ENCODE measurements at regions of chr7 and their contacts with region 1.

Region 1: GRCh38 chr7:47435889-47436312 is 146.0 kb downstream of the TNS3 start:
- DNase-seq: peak; percentile 79
- H3K4me3 ChIP-seq: no peak overlapping the region
- H3K27ac ChIP-seq: no peak overlapping the region
- H3K4me1 ChIP-seq: peaks cover 0 to 12% of the 10 kb centered on the region in 2 experiments; a peak in 2 of 4 replicates
- H3K27me3 ChIP-seq: no peaks in the 10 kb centered on the region
- CTCF ChIP-seq: peak; percentile 79
- EP300 ChIP-seq: no peak
- RAD21 ChIP-seq: peak; percentile 95

Region 2: DNA sequence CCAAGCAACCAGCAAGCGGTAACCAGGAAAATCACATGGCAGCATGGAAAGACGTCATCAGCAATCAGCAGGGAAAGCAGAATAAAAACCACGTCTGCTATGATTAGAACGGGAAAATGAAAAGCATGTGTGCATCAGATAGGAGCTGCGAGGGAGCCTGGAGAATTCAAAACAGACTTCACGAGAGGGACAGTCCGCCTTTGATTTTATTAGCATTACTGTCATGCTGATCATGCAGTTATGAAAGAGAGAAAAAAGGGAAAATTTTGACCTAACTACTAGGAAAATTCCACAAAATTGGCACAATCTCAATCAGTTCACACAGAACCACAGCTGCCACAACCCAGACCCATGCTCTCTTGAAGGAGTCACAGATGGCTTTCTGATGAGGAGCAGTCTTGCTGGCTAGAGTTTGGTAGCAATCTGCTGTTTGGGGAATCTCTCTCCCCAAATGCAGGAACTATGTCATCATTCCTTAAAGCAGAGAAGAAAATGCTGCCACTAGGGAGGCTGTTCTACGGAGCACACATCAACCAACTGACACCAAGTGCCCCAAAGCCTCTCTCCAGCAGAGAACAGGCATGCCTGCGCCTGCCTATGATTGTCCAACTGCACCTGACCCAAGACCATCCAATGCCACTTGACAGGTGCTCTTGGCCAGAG is 149.9 kb before region 1 on chr7:
- CTCF ChIA-PET with region 1: interaction called, 12 read pairs
- POLR2A ChIA-PET with region 1: no interaction called
- DNase-seq: peak; percentile 85
- H3K4me3 ChIP-seq: no peak overlapping the region
- H3K27ac ChIP-seq: peak overlapping the region; percentile 77 to 80
- H3K4me1 ChIP-seq: peaks cover 4 to 20% of the 10 kb centered on the region in 2 experiments; a peak in 3 of 4 replicates
- H3K27me3 ChIP-seq: no peaks in the 10 kb centered on the region
- CTCF ChIP-seq: peak; percentile 47
- EP300 ChIP-seq: peak; percentile 62 to 88; a peak in 3 of 4 replicates
- RAD21 ChIP-seq: peak; percentile 33

Region 3: GRCh38 chr7:47418601-47419381 is 17.1 kb before region 1 on chr7:
- CTCF ChIA-PET with region 1: interaction called, 13 read pairs
- POLR2A ChIA-PET with region 1: no interaction called
- DNase-seq: no peak
- H3K4me3 ChIP-seq: no peak overlapping the region
- H3K27ac ChIP-seq: no peak overlapping the region
- H3K4me1 ChIP-seq: peaks cover 0 to 3% of the 10 kb centered on the region in 2 experiments; a peak in 1 of 4 replicates
- H3K27me3 ChIP-seq: no peaks in the 10 kb centered on the region
- CTCF ChIP-seq: no peak
- EP300 ChIP-seq: no peak
- RAD21 ChIP-seq: no peak

Region 4: GRCh38 chr7:47453093-47454049 is 17.5 kb after region 1 on chr7:
- CTCF ChIA-PET with region 1: interaction called, 60 read pairs
- POLR2A ChIA-PET with region 1: no interaction called
- DNase-seq: no peak
- H3K4me3 ChIP-seq: 0 out of 4 replicates have a peak overlapping the region, but pooled peaks of 1 of the 2 experiments have one; percentile 0
- H3K27ac ChIP-seq: peak overlapping the region; percentile 78 to 89
- H3K4me1 ChIP-seq: peaks cover 39 to 47% of the 10 kb centered on the region in 2 experiments
- H3K27me3 ChIP-seq: no peaks in the 10 kb centered on the region
- CTCF ChIP-seq: no peak
- EP300 ChIP-seq: peak in 1 of 2 experiments; percentile 51; a peak in 1 of 4 replicates
- RAD21 ChIP-seq: no peak

Region 5: DNA sequence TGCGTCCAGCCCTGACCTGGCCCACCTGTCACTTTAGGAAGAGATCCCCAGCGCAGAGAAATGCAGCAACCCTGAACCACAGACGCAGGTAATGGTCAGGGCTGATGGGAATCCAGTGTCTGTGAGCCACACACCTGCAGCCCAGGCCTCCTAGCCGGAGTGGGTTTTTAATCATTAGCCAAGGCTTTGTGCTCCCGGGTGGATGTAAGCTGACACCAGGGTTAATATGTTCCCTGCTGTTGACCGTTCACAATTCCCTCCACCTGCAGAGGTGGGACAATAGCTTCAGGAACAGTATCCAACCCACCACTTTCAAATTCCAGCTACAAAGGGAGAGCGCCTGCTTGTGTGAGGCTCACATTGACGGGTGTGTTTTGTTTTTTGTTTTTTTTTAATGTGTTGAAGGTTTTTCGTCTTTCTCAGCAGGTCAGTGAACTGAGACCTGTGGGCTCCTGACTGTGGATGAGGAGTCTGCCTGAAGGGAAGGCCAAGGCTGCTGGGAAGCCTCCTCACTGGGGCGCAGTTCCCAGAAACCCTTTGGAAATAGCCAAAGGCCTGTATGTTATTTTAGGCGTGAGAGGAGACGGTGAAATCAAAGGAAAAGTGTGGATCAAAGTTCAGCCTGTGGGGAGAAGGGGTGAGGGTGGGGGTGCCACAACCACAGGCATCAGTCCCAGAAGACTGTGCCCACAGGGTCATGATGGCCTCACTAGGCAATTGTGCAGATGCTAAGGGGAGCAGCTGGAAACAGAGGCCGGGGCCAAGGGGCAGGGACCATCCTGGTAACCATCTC is 34.9 kb after region 1 on chr7:
- CTCF ChIA-PET with region 1: no interaction called
- POLR2A ChIA-PET with region 1: no interaction called
- DNase-seq: no peak
- H3K4me3 ChIP-seq: no peak overlapping the region
- H3K27ac ChIP-seq: no peak overlapping the region
- H3K4me1 ChIP-seq: peaks cover 0 to 12% of the 10 kb centered on the region in 2 experiments; a peak in 3 of 4 replicates
- H3K27me3 ChIP-seq: no peaks in the 10 kb centered on the region
- CTCF ChIP-seq: no peak
- EP300 ChIP-seq: no peak
- RAD21 ChIP-seq: no peak

Region 6: DNA sequence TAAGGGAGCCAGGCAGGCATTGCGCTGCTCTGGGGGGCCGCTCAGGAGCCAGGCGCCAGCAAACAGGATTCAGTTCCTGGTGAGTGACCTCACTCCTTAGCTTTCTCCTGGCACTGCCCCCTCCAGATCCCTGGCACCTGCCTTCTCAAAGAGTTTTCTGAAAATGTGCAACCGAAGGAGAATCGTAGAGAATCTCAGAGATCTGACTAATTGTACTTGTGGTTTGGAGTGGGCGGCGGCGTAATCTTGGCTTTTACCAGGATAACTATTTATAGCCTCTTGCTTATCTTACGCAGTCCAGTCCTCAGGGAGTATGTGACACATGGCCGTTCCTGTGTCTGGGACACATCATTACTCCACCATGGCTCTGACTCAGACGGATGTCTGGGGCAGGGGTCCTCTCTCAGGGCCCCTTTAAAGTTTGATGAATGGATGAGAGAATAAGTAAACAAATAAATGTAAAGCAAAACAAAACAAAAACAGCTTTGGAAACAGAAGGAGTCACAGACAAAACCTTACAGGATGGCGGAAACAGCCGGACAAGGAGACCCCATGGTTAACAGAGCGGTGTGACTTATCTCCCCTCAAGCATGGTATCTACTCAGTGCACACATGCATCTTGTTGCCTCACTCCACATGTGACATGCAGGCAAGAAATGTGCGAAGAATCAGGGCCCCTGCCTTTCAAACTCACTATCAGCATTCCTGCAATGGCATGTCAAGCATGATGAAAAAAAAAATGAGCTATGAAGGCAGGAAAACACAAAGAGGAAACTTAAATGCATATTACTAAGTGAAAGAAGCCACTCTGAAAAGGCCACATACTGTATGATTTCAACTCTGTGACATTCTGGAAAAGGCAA is 46.3 kb after region 1 on chr7:
- CTCF ChIA-PET with region 1: interaction called, 12 read pairs
- POLR2A ChIA-PET with region 1: no interaction called
- DNase-seq: peak; percentile 81
- H3K4me3 ChIP-seq: 0 out of 4 replicates have a peak overlapping the region, but pooled peaks of 1 of the 2 experiments have one; percentile 9
- H3K27ac ChIP-seq: peak overlapping the region; percentile 67 to 92
- H3K4me1 ChIP-seq: peaks cover 29 to 53% of the 10 kb centered on the region in 2 experiments
- H3K27me3 ChIP-seq: no peaks in the 10 kb centered on the region
- CTCF ChIP-seq: no peak
- EP300 ChIP-seq: peak; percentile 63 to 89; a peak in 2 of 4 replicates
- RAD21 ChIP-seq: no peak

Region 7: GRCh38 chr7:47763063-47763974 is 327.4 kb after region 1 on chr7:
- CTCF ChIA-PET with region 1: interaction called, 12 read pairs
- POLR2A ChIA-PET with region 1: no interaction called
- DNase-seq: peak; percentile 80
- H3K4me3 ChIP-seq: peak overlapping the region; percentile 8 to 9; a peak in 1 of 4 replicates
- H3K27ac ChIP-seq: peak overlapping the region; percentile 99
- H3K4me1 ChIP-seq: peaks cover 27 to 33% of the 10 kb centered on the region in 2 experiments
- H3K27me3 ChIP-seq: no peaks in the 10 kb centered on the region
- CTCF ChIP-seq: no peak
- EP300 ChIP-seq: peak; percentile 99
- RAD21 ChIP-seq: peak; percentile 25

Region 8: DNA sequence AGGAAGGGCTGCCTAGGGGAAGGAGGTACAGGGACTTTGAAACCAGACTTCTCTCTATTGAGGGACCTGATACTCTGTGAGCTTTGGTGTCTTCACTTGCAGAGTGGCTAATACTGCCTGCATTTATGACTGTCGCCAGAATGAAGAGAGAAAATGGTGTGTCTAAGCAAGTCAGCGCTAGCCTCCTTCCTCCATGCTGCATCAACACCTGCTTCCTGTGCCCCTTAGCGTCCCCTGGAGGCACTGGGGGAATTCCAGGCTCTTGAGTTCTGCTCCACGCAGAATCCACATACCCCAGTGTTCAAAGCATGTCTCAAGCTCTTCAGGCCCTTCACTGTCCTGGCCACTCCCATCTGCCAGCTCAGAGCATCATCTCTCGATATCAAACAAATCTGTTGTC is 371.9 kb after region 1 on chr7:
- CTCF ChIA-PET with region 1: interaction called, 11 read pairs
- POLR2A ChIA-PET with region 1: no interaction called
- DNase-seq: no peak
- H3K4me3 ChIP-seq: no peak overlapping the region
- H3K27ac ChIP-seq: no peak overlapping the region
- H3K4me1 ChIP-seq: peaks cover 0 to 27% of the 10 kb centered on the region in 2 experiments; a peak in 1 of 4 replicates
- H3K27me3 ChIP-seq: no peaks in the 10 kb centered on the region
- CTCF ChIP-seq: no peak
- EP300 ChIP-seq: no peak
- RAD21 ChIP-seq: no peak